ENCODE measurements at regions of chr12 and their contacts with region 1.

Region 1: GRCh38 chr12:13100882-13101769 is 2.3 kb downstream of the GSG1 start:
- DNase-seq: peak; percentile 90 to 91
- ATAC-seq: peak; percentile 75 to 95 (median 84)
- H3K4me3 ChIP-seq: peak overlapping the region; percentile 29 to 67 (median 60)
- H3K27ac ChIP-seq: peak overlapping the region; percentile 86 to 98 (median 96)
- H3K4me1 ChIP-seq: peaks cover 10 to 69% (median 50%) of the 10 kb centered on the region in 9 donors
- H3K27me3 ChIP-seq: no peaks in the 10 kb centered on the region
- CTCF ChIP-seq: peak in 1 of 9 donors; percentile 9

Region 2: GRCh38 chr12:12916135-12916944 is 184.8 kb before region 1 on chr12:
- intact Hi-C with region 1: loop called in 4 of 10 experiments (anchors 1 to 10 kb)
- DNase-seq: peak; percentile 85 to 87
- ATAC-seq: peak; percentile 87 to 97 (median 95)
- H3K4me3 ChIP-seq: peak overlapping the region in 5 of 10 donors; percentile 16 to 32 (median 19)
- H3K27ac ChIP-seq: peak overlapping the region in 8 of 10 donors; percentile 12 to 51 (median 35)
- H3K4me1 ChIP-seq: peaks cover 0 to 19% (median 8%) of the 10 kb centered on the region in 9 donors
- H3K27me3 ChIP-seq: peaks cover 0 to 3% (median 0%) of the 10 kb centered on the region in 7 donors
- CTCF ChIP-seq: peak; percentile 94 to 99 (median 98)

Region 3: DNA sequence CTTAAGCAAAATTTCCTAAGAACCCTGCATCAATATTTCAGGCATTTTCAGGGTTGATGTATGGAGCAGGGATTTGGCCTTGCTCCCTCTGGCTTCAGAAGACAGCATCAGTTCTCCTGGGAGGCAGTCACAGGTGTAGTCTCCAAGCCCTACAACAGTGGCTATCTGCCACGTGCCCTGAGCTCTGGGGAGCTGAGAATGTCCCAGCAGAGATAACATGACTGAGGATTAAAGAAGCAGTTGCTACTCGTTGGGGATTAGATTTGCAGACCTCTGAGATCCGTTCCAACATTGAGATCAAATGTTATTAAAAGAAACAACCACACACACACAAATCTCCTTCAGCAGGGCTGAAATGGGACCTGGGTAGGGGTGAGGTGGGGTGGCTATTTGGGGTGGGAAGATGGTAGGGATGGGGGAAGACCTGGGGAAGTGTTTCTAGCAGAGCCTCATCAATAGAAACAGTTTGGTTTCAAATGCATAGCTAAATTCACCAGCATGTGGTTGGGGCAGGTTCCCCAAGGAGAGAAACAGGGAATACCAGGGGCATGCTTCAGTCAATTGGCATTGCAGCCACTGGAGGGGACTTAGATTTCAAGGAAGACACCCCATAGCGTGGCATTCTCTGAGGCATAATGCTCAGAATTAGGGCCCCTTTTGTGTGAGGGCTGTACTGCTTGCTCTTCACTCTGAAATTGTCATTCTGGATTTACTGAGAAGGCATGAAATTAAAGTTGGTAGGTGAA is 72.1 kb before region 1 on chr12:
- intact Hi-C with region 1: loop called in 2 of 10 experiments (anchors 5 to 10 kb)
- DNase-seq: no peak
- ATAC-seq: no peak
- H3K4me3 ChIP-seq: no peak overlapping the region
- H3K27ac ChIP-seq: no peak overlapping the region
- H3K4me1 ChIP-seq: peaks cover 0 to 14% (median 0%) of the 10 kb centered on the region in 9 donors
- H3K27me3 ChIP-seq: peaks cover 0 to 3% (median 0%) of the 10 kb centered on the region in 7 donors
- CTCF ChIP-seq: no peak

Region 4: GRCh38 chr12:13154027-13154538 is 53.0 kb after region 1 on chr12:
- intact Hi-C with region 1: loop called in 2 of 10 experiments (anchors 5 kb)
- DNase-seq: no peak
- ATAC-seq: peak in 1 of 8 donors; percentile 5
- H3K4me3 ChIP-seq: no peak overlapping the region
- H3K27ac ChIP-seq: peak overlapping the region in 4 of 10 donors; percentile 3 to 75 (median 24)
- H3K4me1 ChIP-seq: peaks cover 0 to 25% (median 9%) of the 10 kb centered on the region in 9 donors
- H3K27me3 ChIP-seq: no peaks in the 10 kb centered on the region
- CTCF ChIP-seq: no peak

Region 5: GRCh38 chr12:13205809-13206559 is 104.9 kb after region 1 on chr12:
- intact Hi-C with region 1: loop called in 8 of 10 experiments (anchors 2 to 5 kb)
- DNase-seq: no peak
- ATAC-seq: peak in 1 of 8 donors; percentile 50
- H3K4me3 ChIP-seq: no peak overlapping the region
- H3K27ac ChIP-seq: peak overlapping the region in 9 of 10 donors; percentile 10 to 80 (median 62)
- H3K4me1 ChIP-seq: peaks cover 27 to 100% (median 95%) of the 10 kb centered on the region in 9 donors
- H3K27me3 ChIP-seq: no peaks in the 10 kb centered on the region
- CTCF ChIP-seq: no peak